ENCODE measurements at regions of chr12 and their contacts with region 1.

Region 1: DNA sequence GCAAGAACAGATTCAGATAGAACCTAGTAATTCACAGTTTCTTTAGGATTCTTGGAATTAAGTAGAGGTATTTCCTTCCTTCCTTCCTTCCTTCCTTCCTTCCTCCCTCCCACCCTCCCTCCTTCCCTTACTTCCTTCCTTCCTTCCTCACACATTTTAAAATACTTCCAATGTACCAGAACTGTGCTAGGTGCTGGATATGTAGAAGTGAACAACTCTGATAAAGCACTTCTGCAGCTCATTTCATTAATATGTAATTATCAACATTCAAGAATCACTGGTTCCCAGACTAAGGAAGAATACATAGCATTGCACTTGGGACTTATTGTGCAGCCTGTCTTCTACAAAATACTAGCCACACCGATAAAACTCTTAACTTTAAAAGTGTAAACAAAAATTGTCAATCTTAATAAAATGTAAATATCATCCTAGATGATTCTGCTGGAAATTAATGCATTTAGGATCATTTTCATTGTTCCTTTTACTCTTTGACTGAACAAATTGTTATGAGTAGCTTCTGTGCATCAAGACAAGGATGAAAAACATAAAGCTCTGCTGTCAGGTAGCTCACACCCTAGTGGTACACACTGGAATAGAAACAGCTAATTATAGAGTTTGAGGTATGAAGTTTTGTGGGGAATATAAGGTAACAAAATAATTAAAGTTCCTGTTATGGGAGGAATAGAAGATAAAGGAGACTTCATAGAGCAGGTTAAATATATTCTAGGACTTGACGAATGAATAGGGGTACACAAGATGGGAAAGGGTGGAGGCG is 99.9 kb upstream of the MYF6 start:
- DNase-seq: no peak
- ATAC-seq: no peak
- H3K4me3 ChIP-seq: no peak overlapping the region
- H3K27ac ChIP-seq: no peak overlapping the region
- H3K4me1 ChIP-seq: no peaks in the 10 kb centered on the region
- H3K27me3 ChIP-seq: no peaks in the 10 kb centered on the region

Region 2: DNA sequence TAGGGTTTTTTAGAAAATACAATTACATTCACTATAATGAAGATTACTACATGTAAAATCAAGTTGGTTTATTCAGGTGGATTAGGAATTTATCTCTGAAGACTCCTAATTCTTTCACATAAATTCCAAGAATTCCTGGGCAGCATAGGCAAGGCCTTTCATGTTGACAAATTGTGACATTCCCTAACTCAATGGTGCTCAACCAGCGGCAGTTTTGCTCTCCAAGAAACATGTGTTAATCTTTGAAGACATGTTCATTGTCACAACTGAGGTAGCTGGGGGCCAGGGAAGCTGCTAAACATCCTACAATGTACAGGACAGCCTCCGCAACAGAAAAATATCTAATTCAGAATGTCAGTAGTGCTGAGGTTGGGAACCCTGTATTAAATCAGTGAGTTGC is 117.2 kb before region 1 on chr12:
- intact Hi-C with region 1: loop called in 1 of 4 experiments (anchors 5 kb)
- DNase-seq: no peak
- ATAC-seq: no peak
- H3K4me3 ChIP-seq: no peak overlapping the region
- H3K27ac ChIP-seq: no peak overlapping the region
- H3K4me1 ChIP-seq: no peaks in the 10 kb centered on the region
- H3K27me3 ChIP-seq: no peaks in the 10 kb centered on the region

Region 3: GRCh38 chr12:80632835-80633234 is 25.3 kb after region 1 on chr12:
- intact Hi-C with region 1: no loop called
- DNase-seq: no peak
- ATAC-seq: no peak
- H3K4me3 ChIP-seq: no peak overlapping the region
- H3K27ac ChIP-seq: no peak overlapping the region
- H3K4me1 ChIP-seq: peaks cover 4% of the 10 kb centered on the region
- H3K27me3 ChIP-seq: no peaks in the 10 kb centered on the region

Region 4: GRCh38 chr12:80648881-80649280 is 41.3 kb after region 1 on chr12:
- intact Hi-C with region 1: no loop called
- DNase-seq: no peak
- ATAC-seq: no peak
- H3K4me3 ChIP-seq: no peak overlapping the region
- H3K27ac ChIP-seq: no peak overlapping the region
- H3K4me1 ChIP-seq: no peaks in the 10 kb centered on the region
- H3K27me3 ChIP-seq: no peaks in the 10 kb centered on the region

Region 5: GRCh38 chr12:80763874-80764273 is 156.3 kb after region 1 on chr12:
- intact Hi-C with region 1: no loop called
- DNase-seq: no peak
- ATAC-seq: no peak
- H3K4me3 ChIP-seq: no peak overlapping the region
- H3K27ac ChIP-seq: no peak overlapping the region
- H3K4me1 ChIP-seq: no peaks in the 10 kb centered on the region
- H3K27me3 ChIP-seq: no peaks in the 10 kb centered on the region

Region 6: GRCh38 chr12:81268664-81268926 is 661.0 kb after region 1 on chr12:
- intact Hi-C with region 1: no loop called
- DNase-seq: no peak
- ATAC-seq: no peak
- H3K4me3 ChIP-seq: no peak overlapping the region
- H3K27ac ChIP-seq: no peak overlapping the region
- H3K4me1 ChIP-seq: no peaks in the 10 kb centered on the region
- H3K27me3 ChIP-seq: no peaks in the 10 kb centered on the region

Measured in right cardiac atrium (tissue), 5 donors.